CD4-positive, alpha-beta T cell (primary cell): ENCODE measurements at regions of chr14 and their contacts with region 1.

Region 1: GRCh38 chr14:99258876-99259726 is 12.9 kb downstream of the BCL11B start:
- DNase-seq: peak in 9 of 14 experiments; percentile 48 to 90 (median 61)
- ATAC-seq: peak; percentile 47
- H3K4me3 ChIP-seq: peak overlapping the region; percentile 97
- H3K4me3 Mint-ChIP-seq: peak overlapping the region; percentile 100
- H3K27ac ChIP-seq: peak overlapping the region; percentile 95 to 97
- H3K27ac Mint-ChIP-seq: peak overlapping the region; percentile 99
- H3K4me1 ChIP-seq: peaks cover 97% of the 10 kb centered on the region
- H3K4me1 Mint-ChIP-seq: peaks cover 97% of the 10 kb centered on the region
- H3K27me3 ChIP-seq: no peaks in the 10 kb centered on the region
- H3K27me3 Mint-ChIP-seq: no peaks in the 10 kb centered on the region
- CTCF ChIP-seq: no peak

Region 2: DNA sequence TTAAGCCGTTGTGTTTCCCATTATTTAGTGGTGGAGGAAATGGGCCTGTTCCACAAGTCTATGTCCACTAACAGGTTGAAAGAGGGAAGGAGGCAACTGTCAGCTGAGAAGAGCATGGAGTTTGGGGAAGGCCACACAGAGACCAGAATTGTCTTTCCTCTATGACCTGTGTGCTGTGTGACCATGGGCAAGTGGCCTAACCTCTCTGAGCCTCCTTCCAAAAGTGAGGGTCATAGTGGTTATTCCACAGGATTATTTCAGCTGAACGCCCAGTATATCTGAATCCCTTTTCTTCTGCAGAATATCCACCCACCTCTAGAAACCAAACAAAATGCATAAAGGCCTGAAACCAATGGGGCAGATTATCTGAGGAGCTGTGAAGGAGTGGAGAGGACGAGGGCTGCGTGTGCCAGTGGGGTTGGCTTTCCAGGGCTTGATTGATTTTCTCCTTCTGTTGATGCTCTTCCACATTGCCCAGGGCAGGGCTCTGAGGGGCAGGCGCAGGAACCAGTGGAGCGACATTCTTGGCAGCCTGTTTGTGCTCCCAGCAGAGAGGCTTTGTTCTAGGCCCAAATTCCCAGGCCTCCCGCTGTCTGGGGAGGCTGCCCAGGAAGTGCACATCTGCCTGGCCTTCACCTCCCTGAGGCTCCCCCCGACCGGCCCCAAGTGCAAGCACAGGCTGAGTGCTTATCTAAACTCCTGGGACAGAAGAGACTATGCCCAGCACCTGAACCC is 439.8 kb before region 1 on chr14:
- CTCF ChIA-PET with region 1: no interaction called
- POLR2A ChIA-PET with region 1: no interaction called
- intact Hi-C with region 1: no loop called
- DNase-seq: no peak
- ATAC-seq: no peak
- H3K4me3 ChIP-seq: no peak overlapping the region
- H3K4me3 Mint-ChIP-seq: no peak overlapping the region
- H3K27ac ChIP-seq: no peak overlapping the region
- H3K27ac Mint-ChIP-seq: no peak overlapping the region
- H3K4me1 ChIP-seq: peaks cover 3% of the 10 kb centered on the region
- H3K4me1 Mint-ChIP-seq: peaks cover 10% of the 10 kb centered on the region
- H3K27me3 ChIP-seq: no peaks in the 10 kb centered on the region
- H3K27me3 Mint-ChIP-seq: no peaks in the 10 kb centered on the region
- CTCF ChIP-seq: no peak

Region 3: GRCh38 chr14:99047441-99048031 is 211.6 kb before region 1 on chr14:
- CTCF ChIA-PET with region 1: no interaction called
- POLR2A ChIA-PET with region 1: no interaction called
- intact Hi-C with region 1: no loop called
- DNase-seq: peak in 1 of 14 experiments; percentile 39
- ATAC-seq: no peak
- H3K4me3 ChIP-seq: no peak overlapping the region
- H3K4me3 Mint-ChIP-seq: no peak overlapping the region
- H3K27ac ChIP-seq: no peak overlapping the region
- H3K27ac Mint-ChIP-seq: no peak overlapping the region
- H3K4me1 ChIP-seq: no peaks in the 10 kb centered on the region
- H3K4me1 Mint-ChIP-seq: peaks cover 30% of the 10 kb centered on the region
- H3K27me3 ChIP-seq: no peaks in the 10 kb centered on the region
- H3K27me3 Mint-ChIP-seq: no peaks in the 10 kb centered on the region
- CTCF ChIP-seq: no peak

Region 4: GRCh38 chr14:99241325-99242010 is 17.6 kb before region 1 on chr14:
- CTCF ChIA-PET with region 1: interaction called, 179 read pairs
- POLR2A ChIA-PET with region 1: interaction called, 4,389 read pairs
- intact Hi-C with region 1: loop called (anchors 1 kb)
- DNase-seq: peak in 9 of 14 experiments; percentile 49 to 82 (median 66)
- ATAC-seq: peak; percentile 38
- H3K4me3 ChIP-seq: peak overlapping the region; percentile 42
- H3K4me3 Mint-ChIP-seq: peak overlapping the region; percentile 94
- H3K27ac ChIP-seq: peak overlapping the region; percentile 95 to 97
- H3K27ac Mint-ChIP-seq: peak overlapping the region; percentile 95
- H3K4me1 ChIP-seq: peaks cover 89% of the 10 kb centered on the region
- H3K4me1 Mint-ChIP-seq: peaks cover 88% of the 10 kb centered on the region
- H3K27me3 ChIP-seq: no peaks in the 10 kb centered on the region
- H3K27me3 Mint-ChIP-seq: no peaks in the 10 kb centered on the region
- CTCF ChIP-seq: no peak